ENCODE measurements at regions of chr19 and their contacts with region 1.

Region 1: GRCh38 chr19:38514812-38515633 is 81.5 kb downstream of the RYR1 start:
- DNase-seq: peak; percentile 90

Region 2: GRCh38 chr19:38402967-38403861 is 111.8 kb before region 1 on chr19 and contains the start of gene FAM98C:
- intact Hi-C with region 1: loop called in 1 of 2 experiments (anchors 10 kb)
- DNase-seq: peak; percentile 98
- total RNA-seq, gene FAM98C: 9.6 to 10.7 TPM

Region 3: DNA sequence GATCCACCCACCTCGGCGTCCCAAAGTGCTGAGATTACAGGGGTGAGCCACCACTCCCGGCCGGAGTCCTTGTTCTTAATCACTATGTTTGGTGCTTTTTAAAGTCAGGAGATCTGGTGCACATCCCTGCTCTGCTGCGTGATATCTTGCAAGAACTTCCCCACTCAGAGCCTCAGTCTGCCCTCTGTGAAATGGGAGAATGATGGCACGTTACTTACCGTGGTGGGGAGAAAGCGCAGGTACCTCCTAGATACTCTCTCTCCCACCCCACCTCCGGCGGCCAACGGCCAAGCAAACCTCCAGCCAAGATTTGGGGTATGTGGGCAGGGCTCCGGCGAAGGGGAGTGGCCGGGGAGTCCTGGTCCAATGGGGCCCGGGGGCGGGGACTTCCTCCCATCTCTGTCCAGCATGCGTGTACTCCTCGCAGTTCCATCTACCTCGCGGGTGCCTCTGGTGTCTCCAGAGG is 81.7 kb before region 1 on chr19 and contains the start of gene RYR1:
- intact Hi-C with region 1: no loop called
- DNase-seq: peak; percentile 88
- total RNA-seq, gene RYR1: 1.3 to 5.6 TPM